ENCODE measurements at regions of chr11 and their contacts with region 1.

Region 1: GRCh38 chr11:129364143-129364654 is 11.4 kb upstream of the BARX2 start:
- DNase-seq: peak; percentile 35 to 52
- ATAC-seq: peak in 1 of 2 donors; percentile 86
- H3K4me3 ChIP-seq: peak overlapping the region in 1 of 4 donors; percentile 2
- H3K27ac ChIP-seq: no peak overlapping the region
- H3K4me1 ChIP-seq: no peaks in the 10 kb centered on the region
- H3K27me3 ChIP-seq: peaks cover 25 to 37% (median 34%) of the 10 kb centered on the region in 3 donors
- CTCF ChIP-seq: peak; percentile 46 to 86 (median 66)
- POLR2A ChIP-seq: no peak

Region 2: DNA sequence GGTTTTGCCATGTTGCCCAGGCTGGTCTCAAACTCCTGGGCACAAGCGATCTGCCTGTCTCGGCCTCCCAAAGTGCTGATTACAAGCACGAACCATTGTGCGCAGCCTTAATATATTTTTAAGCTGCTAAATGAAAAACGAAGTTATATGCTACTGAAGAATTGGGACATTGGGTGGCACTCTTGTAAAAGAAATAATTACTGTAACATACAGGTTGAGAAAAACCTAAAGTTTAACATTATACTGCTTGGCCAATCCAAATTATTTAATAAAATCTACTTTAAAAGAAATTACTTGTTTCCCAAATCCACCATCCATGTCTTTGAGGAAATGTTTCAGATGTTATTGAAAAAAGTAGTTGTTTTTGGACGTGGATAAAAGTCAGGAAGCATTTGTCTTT is 134.2 kb before region 1 on chr11:
- in situ Hi-C with region 1: no loop called
- intact Hi-C with region 1: no loop called
- DNase-seq: no peak
- ATAC-seq: no peak
- H3K4me3 ChIP-seq: no peak overlapping the region
- H3K27ac ChIP-seq: no peak overlapping the region
- H3K4me1 ChIP-seq: no peaks in the 10 kb centered on the region
- H3K27me3 ChIP-seq: no peaks in the 10 kb centered on the region
- CTCF ChIP-seq: no peak
- POLR2A ChIP-seq: no peak

Region 3: DNA sequence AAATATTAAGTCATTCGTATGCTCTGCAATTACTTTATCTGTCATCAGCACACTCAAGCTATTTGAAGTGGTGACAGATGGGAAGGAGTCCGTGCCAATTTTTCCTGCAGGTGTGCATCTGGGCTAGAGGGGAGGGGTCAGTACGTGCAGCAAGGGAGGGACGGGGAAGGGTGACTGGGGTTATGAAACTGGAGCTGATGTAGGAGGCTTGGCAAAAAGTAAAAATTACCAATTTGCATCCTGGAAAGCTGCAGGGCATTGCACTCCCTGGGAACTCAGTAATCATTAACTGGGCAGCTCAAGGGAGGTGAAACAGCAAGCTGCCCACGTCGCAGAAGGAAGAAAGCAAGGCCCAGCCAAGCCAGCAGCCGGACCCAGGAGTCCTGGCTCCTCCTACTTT is 364.4 kb after region 1 on chr11:
- in situ Hi-C with region 1: loop called in 2 of 4 experiments (anchors 25 kb)
- intact Hi-C with region 1: no loop called
- DNase-seq: no peak
- ATAC-seq: no peak
- H3K4me3 ChIP-seq: no peak overlapping the region
- H3K27ac ChIP-seq: no peak overlapping the region
- H3K4me1 ChIP-seq: no peaks in the 10 kb centered on the region
- H3K27me3 ChIP-seq: no peaks in the 10 kb centered on the region
- CTCF ChIP-seq: no peak
- POLR2A ChIP-seq: no peak

Region 4: DNA sequence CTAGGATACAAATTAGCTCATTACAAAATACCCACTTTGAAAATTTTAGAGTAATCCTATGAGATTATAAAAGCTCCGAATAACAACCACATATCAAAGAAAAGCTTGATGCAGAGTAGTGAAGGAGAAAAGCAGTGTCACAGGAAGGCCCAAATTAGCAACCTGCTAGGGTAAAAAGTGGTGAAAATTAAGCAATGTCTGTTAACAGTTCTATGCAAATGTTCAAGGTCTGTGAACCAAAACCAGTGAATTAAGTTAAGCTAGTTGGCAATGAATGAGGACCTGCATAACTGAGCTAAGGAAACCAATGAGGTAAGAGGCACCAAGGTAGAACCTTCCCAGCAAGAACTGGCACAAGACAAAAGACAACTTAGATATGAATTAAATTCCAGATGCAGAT is 608.9 kb after region 1 on chr11:
- in situ Hi-C with region 1: no loop called
- intact Hi-C with region 1: no loop called
- DNase-seq: no peak
- ATAC-seq: no peak
- H3K4me3 ChIP-seq: no peak overlapping the region
- H3K27ac ChIP-seq: no peak overlapping the region
- H3K4me1 ChIP-seq: peaks cover 0 to 3% of the 10 kb centered on the region in 2 donors
- H3K27me3 ChIP-seq: no peaks in the 10 kb centered on the region
- CTCF ChIP-seq: no peak
- POLR2A ChIP-seq: no peak